Activated naive CD4-positive, alpha-beta T cell treated with anti-CD3 and anti-CD28 coated beads for 36 hours (primary cell): ENCODE measurements at regions of chr2 and their contacts with region 1.

Region 1: DNA sequence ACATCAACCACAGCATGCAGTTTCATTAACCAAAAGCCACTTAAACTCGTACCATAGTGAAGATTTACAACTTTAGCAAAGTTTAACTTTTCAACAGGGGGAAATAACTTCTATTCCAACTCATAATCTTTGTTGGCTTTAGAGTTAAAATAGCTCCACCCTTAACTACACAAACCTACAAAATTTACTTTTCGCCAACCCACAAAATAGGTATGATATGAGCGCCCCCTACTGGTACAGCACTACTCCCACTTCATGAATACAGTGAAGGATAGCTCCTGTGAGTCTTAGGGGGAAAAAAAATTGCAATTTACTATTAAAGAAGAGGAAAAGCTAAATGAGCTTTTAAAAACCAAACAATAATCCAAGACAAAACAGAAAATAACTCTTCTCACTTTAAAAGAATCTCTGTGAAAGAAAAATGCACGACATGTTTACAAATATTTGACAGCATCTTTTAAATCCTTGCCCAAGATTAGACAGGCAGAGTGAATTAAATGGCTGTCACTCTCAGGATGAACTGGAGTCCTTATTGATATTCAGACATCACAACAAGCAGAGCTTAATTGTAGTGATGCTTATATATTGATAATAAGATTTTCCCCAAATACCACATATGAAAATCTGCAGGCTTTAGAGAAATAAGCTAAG is 32.2 kb downstream of the TMEFF2 start:
- DNase-seq: peak; percentile 83
- H3K4me3 Mint-ChIP-seq: no peak overlapping the region
- H3K27ac Mint-ChIP-seq: no peak overlapping the region
- H3K4me1 Mint-ChIP-seq: peaks cover 11% of the 10 kb centered on the region
- H3K27me3 Mint-ChIP-seq: peaks cover 9% of the 10 kb centered on the region

Region 2: DNA sequence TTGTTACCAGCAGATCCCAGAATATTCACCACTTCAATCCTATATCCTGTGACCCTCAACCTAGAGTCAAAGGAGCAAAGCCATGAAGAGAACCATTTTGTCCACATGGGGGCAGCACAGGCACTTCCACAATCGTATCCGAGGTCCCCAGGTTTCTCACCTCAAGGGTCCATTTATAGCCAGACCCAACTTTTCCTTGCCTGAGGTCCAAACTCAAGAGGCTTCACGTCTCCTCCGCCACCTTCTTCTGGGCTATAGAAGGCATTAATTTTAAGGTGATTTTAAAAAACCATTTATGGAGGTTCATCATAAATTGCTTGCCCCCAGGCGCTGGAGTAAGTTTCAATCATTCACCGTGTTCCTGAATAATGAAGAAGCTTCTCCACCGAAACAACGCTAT is 596.2 kb before region 1 on chr2:
- CTCF ChIA-PET with region 1: interaction called, 28 read pairs
- intact Hi-C with region 1: loop called (anchors 1 kb)
- DNase-seq: peak; percentile 83
- H3K4me3 Mint-ChIP-seq: no peak overlapping the region
- H3K27ac Mint-ChIP-seq: no peak overlapping the region
- H3K4me1 Mint-ChIP-seq: peaks cover 20% of the 10 kb centered on the region
- H3K27me3 Mint-ChIP-seq: peaks cover 11% of the 10 kb centered on the region

Region 3: DNA sequence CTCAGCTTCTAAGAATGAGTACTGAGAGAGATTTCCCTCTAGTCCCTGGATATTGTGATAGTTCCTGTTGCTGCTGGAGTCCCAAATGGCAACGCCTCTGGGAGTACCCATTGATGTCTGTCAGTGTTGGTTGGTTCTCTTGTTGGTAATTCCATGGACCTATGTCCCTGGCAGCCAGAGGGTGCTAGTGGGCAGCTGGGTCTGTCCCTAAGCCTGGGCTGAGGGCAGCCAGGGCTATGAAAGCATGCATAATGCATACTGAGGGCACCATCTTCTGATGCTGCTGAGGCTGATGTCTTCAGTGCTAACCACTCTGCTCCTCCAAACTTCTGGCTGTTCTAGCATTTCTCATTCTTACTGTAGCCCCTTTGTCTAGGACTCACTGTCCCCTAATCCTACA is 448.7 kb before region 1 on chr2:
- CTCF ChIA-PET with region 1: interaction called, 3 read pairs
- intact Hi-C with region 1: loop called (anchors 5 kb)
- DNase-seq: peak; percentile 46
- H3K4me3 Mint-ChIP-seq: no peak overlapping the region
- H3K27ac Mint-ChIP-seq: no peak overlapping the region
- H3K4me1 Mint-ChIP-seq: no peaks in the 10 kb centered on the region
- H3K27me3 Mint-ChIP-seq: no peaks in the 10 kb centered on the region

Region 4: GRCh38 chr2:191811807-191812602 is 350.5 kb before region 1 on chr2:
- CTCF ChIA-PET with region 1: interaction called, 50 read pairs
- intact Hi-C with region 1: loop called (anchors 1 kb)
- DNase-seq: peak; percentile 69
- H3K4me3 Mint-ChIP-seq: no peak overlapping the region
- H3K27ac Mint-ChIP-seq: no peak overlapping the region
- H3K4me1 Mint-ChIP-seq: no peaks in the 10 kb centered on the region
- H3K27me3 Mint-ChIP-seq: peaks cover 7% of the 10 kb centered on the region

Region 5: DNA sequence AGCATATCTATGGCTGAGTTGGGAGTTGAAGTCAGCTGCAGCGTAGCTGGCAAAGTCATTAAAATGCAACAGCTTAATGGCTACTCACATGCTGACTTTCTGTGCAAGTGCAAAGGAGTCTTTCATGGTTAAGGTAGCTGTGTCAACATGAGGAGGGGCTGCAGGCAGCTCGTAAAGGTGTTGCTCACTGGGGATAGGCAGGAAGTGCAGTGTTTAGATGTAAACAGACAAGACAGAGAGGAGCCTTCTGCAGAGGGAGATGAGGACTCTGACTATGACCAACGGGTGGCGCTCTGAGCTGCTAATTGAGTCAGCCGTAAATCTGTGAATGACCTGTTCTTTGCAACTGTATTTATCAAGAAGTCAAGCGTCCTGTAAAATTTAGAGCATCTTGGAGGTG is 293.3 kb before region 1 on chr2:
- CTCF ChIA-PET with region 1: interaction called, 10 read pairs
- intact Hi-C with region 1: loop called (anchors 1 kb)
- DNase-seq: peak; percentile 15
- H3K4me3 Mint-ChIP-seq: no peak overlapping the region
- H3K27ac Mint-ChIP-seq: no peak overlapping the region
- H3K4me1 Mint-ChIP-seq: no peaks in the 10 kb centered on the region
- H3K27me3 Mint-ChIP-seq: peaks cover 9% of the 10 kb centered on the region

Region 6: GRCh38 chr2:192194866-192195547 is 32.5 kb after region 1 on chr2 and contains the start of gene TMEFF2:
- CTCF ChIA-PET with region 1: interaction called, 14 read pairs
- intact Hi-C with region 1: no loop called
- DNase-seq: peak; percentile 73
- H3K4me3 Mint-ChIP-seq: peak within 1 kb of the TSS; percentile 74
- H3K27ac Mint-ChIP-seq: no peak within 1 kb of the TSS
- H3K4me1 Mint-ChIP-seq: peaks cover 26% of the 10 kb centered on the region
- H3K27me3 Mint-ChIP-seq: peaks cover 53% of the 10 kb centered on the region
- total RNA-seq, gene TMEFF2: not detected

Region 7: DNA sequence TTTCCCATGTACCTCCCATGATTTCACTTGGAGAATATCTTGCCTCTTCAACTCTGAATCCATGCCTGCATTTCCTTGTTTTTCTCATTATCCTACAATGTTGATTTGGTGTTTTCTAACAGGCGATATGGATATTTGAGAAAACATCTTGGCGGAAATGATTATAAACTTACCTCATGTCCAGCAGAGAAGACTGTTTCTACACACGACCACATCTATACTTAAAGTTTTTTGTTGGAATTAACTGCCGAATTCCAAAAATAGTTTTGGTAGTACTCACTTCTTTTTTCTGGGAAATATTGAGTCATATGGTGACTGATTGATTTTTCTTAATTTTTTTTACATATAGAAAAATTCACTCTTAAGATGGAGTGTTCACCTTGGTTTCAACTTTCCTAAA is 73.6 kb after region 1 on chr2:
- CTCF ChIA-PET with region 1: no interaction called
- intact Hi-C with region 1: no loop called
- DNase-seq: no peak
- H3K4me3 Mint-ChIP-seq: no peak overlapping the region
- H3K27ac Mint-ChIP-seq: no peak overlapping the region
- H3K4me1 Mint-ChIP-seq: no peaks in the 10 kb centered on the region
- H3K27me3 Mint-ChIP-seq: no peaks in the 10 kb centered on the region